Mammary epithelial cell (primary cell): ENCODE measurements at regions of chrX and their contacts with region 1.

Region 1: DNA sequence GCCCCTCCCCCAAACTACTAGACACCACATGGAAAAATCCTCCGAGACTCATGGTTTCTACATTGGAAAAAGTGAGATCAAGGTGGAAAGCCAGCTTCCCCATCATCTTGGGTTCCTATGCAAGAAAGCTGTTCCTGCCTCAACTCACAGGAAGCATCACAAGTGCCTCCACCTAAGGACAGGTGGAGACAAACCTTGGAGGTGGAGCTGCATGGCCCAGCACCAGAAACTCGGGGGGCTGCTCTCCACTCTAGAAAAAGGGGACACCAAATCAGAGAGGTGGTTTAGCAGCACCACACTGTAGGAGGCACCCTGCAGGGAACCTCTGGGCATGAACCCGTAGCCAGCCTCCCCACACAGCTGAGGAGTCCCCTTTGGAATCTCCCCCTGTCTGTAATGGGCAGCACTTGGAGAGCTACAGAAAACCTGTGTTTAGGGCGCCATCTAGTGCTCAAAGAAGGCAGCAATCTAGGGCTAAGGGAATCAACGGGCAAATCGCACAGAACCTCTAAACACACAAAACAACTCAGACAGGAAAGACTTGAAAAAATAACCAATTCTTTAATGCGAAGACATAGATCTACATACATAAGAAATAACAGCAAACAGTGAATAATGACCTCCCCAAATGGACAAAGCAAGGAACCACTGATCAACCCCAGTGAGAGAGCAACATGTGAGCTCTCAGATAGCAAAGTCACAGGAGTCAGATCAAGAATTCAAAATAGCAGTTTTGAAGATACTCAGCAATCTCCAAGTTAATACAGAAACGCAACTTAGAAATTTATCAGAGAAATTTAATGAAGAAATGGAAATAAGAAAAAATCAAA is 37.0 kb upstream of the ZBTB33 start:
- DNase-seq: peak; percentile 55
- H3K4me3 ChIP-seq: no peak overlapping the region
- H3K27ac ChIP-seq: no peak overlapping the region
- H3K4me1 ChIP-seq: no peaks in the 10 kb centered on the region
- H3K27me3 ChIP-seq: no peaks in the 10 kb centered on the region
- CTCF ChIP-seq: peak; percentile 94

Region 2: GRCh38 chrX:119981286-119982070 is 232.2 kb before region 1 on chrX:
- CTCF ChIA-PET with region 1: no interaction called
- dilution Hi-C with region 1: no loop called
- in situ Hi-C with region 1: no loop called
- intact Hi-C with region 1: loop called (anchors 1 kb)
- DNase-seq: peak; percentile 20
- H3K4me3 ChIP-seq: no peak overlapping the region
- H3K27ac ChIP-seq: no peak overlapping the region
- H3K4me1 ChIP-seq: no peaks in the 10 kb centered on the region
- H3K27me3 ChIP-seq: no peaks in the 10 kb centered on the region
- CTCF ChIP-seq: peak; percentile 45 to 57

Region 3: DNA sequence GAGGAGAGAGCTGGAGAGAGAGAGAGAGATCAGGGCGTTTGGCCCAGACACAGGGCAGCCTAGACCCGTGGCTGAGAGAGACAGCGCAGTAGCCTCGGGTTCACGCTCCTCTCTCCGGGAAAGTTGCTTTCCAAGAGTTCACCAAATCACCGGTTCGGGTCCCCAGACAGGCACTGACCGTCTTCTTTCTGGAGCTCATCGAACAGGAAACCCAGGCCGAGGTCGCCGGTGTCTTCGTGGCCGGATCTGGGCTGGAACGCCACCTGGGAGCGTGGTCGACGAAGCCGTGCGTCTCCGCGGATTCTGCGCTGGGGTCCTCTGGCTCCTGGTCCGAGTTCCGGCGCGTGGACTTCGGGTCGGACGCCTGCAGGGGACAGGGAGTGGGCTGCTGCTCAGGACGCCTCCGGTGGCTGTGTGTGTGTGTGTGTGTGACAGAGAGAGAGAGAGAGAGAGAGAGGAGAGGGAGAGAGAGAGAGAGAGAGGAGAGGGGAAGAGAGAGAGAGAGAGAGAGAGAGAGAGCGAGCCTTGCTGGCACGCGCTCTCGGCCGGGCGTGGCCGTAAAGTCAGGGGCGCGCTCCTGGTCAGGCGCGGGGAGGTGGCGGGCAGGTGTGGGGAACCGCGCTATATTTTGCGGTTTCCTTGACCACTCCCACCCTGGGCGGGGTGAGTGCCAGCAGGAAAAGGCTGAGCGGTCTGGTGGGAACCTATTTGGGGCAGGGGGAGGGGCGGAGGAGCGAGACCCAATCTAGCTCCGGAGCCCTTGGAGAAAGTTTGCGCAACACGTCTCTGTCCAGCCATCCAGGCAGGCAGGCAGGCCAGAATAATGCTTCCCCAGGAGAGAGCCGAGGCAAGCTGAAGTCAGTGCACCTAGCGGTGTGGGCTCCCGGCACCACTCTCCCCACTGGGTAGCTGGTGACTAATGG is 198.2 kb before region 1 on chrX:
- CTCF ChIA-PET with region 1: no interaction called
- dilution Hi-C with region 1: no loop called
- in situ Hi-C with region 1: loop called in 1 of 2 experiments (anchors 25 kb)
- intact Hi-C with region 1: no loop called
- DNase-seq: no peak
- H3K4me3 ChIP-seq: peak overlapping the region in 1 of 3 experiments; percentile 23
- H3K27ac ChIP-seq: no peak overlapping the region
- H3K4me1 ChIP-seq: no peaks in the 10 kb centered on the region
- H3K27me3 ChIP-seq: peaks cover 10% of the 10 kb centered on the region
- CTCF ChIP-seq: no peak

Region 4: DNA sequence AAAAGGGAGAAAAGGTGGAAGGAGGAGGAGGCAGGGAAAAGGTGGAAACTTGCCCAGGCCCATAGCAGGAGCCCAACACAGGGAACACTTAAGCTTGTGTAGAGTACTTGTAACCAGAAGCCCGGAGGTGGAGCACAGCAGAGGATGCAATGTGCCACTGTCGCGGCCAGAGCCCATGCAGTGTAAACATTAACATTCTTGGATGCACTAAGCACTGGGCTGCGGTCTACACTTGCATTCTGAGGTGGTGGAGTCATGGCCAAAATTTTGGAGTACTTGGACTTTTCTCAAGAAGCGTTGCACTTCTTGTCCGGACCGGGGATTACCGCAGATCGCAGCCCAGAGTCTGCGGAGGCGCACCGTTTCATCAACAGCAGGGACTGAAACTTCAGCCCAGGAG is 93.4 kb before region 1 on chrX:
- CTCF ChIA-PET with region 1: no interaction called
- dilution Hi-C with region 1: no loop called
- in situ Hi-C with region 1: loop called in 1 of 2 experiments (anchors 25 kb)
- intact Hi-C with region 1: no loop called
- DNase-seq: no peak
- H3K4me3 ChIP-seq: no peak overlapping the region
- H3K27ac ChIP-seq: no peak overlapping the region
- H3K4me1 ChIP-seq: no peaks in the 10 kb centered on the region
- H3K27me3 ChIP-seq: no peaks in the 10 kb centered on the region
- CTCF ChIP-seq: no peak